ENCODE measurements at regions of chr6 and their contacts with region 1.

Region 1: GRCh38 chr6:41920921-41921711 is at the starts of genes BYSL and MED20:
- ATAC-seq: peak; percentile 80 to 96 (median 94)
- H3K4me3 ChIP-seq: peak within 1 kb of the TSS; percentile 78 to 99 (median 89)
- H3K27ac ChIP-seq: peak within 1 kb of the TSS; percentile 98 to 99
- H3K4me1 ChIP-seq: peaks cover 15 to 20% of the 10 kb centered on the region in 2 donors
- total RNA-seq, gene BYSL: 9.4 to 46.4 (median 17.8) TPM
- total RNA-seq, gene MED20: 12.4 to 24.3 (median 19.9) TPM

Region 2: GRCh38 chr6:40743226-40743625 is 1177.9 kb before region 1 on chr6:
- in situ Hi-C with region 1: no loop called
- ATAC-seq: no peak
- H3K4me3 ChIP-seq: no peak overlapping the region
- H3K27ac ChIP-seq: no peak overlapping the region
- H3K4me1 ChIP-seq: peaks cover 0 to 11% of the 10 kb centered on the region in 2 donors

Region 3: GRCh38 chr6:41787219-41787917 is 133.7 kb before region 1 on chr6 and contains the start of gene TOMM6:
- in situ Hi-C with region 1: loop called in 2 of 9 experiments (anchors 10 to 25 kb)
- ATAC-seq: peak; percentile 77 to 85 (median 82)
- H3K4me3 ChIP-seq: peak within 1 kb of the TSS; percentile 59 to 97 (median 86)
- H3K27ac ChIP-seq: peak within 1 kb of the TSS; percentile 94 to 98
- H3K4me1 ChIP-seq: peaks cover 8 to 14% of the 10 kb centered on the region in 2 donors
- total RNA-seq, gene TOMM6: 180 to 286 (median 234) TPM

Measured in motor neuron (in vitro differentiated cells).